ENCODE measurements at regions of chr1 and their contacts with region 1.

Region 1: GRCh38 chr1:154220071-154220969 is at the start of gene UBAP2L:
- DNase-seq: peak; percentile 100
- H3K4me3 ChIP-seq: peak within 1 kb of the TSS; percentile 55 to 82 (median 81)
- H3K27ac ChIP-seq: peak within 1 kb of the TSS; percentile 97 to 99 (median 98)
- H3K4me1 ChIP-seq: peaks cover 0 to 59% (median 56%) of the 10 kb centered on the region in 4 donors
- H3K27me3 ChIP-seq: no peaks in the 10 kb centered on the region
- CTCF ChIP-seq: no peak
- EP300 ChIP-seq: peak in 3 of 4 donors; percentile 70 to 100 (median 71)
- POLR2A ChIP-seq: peak; percentile 50 to 71
- total RNA-seq, gene UBAP2L: 36.4 to 58.2 (median 53.5) TPM

Region 2: DNA sequence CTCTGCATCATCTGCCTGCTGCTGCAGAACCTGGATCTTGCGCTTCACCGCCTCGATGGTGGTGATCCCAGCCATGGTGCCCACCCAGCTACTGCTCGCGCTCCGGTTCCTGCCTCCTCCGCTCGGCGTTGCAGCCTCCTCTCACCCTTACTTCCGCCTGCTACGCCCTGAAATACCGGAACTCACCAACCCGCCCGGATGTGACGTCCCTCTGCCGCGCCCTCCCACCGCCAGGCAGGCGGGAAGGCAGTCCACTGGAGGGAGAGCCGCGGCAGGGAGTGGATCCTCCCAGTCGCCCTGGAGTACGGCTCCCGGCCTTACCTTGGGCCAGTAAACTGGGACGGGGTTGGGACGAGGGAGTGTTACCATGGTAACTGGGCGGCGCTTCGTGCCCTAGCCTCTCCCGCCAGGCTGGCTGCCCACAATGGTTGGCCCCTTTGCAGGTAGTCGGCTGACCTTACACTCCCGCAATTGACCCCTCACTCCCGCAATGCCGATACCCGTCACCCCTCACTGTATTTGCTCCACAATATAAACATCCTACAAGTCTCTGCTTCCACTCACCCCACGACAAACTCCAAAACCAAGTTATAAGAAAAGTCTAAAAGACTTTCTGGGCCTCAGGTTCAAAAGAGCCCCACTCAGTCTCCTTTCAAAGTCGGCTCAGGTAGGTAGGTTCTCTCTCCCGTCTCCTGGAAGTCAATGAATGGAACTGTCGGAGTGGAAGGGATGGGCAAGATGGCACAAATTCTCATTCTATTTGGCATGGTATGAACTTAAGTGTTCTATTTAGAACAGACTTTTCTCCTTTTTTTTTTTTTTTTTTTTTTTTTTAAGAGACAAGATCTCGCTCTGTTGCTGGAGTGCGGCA is 37.0 kb before region 1 on chr1:
- intact Hi-C with region 1: loop called (anchors 2 kb)
- DNase-seq: peak; percentile 98
- H3K4me3 ChIP-seq: peak overlapping the region; percentile 78 to 94 (median 81)
- H3K27ac ChIP-seq: peak overlapping the region; percentile 90 to 93 (median 90)
- H3K4me1 ChIP-seq: peaks cover 0 to 47% (median 42%) of the 10 kb centered on the region in 4 donors
- H3K27me3 ChIP-seq: no peaks in the 10 kb centered on the region
- CTCF ChIP-seq: peak in 1 of 4 experiments; percentile 13
- EP300 ChIP-seq: no peak
- POLR2A ChIP-seq: peak; percentile 95 to 99

Measured in sigmoid colon (tissue), 7 donors.